ENCODE measurements at regions of chr17 and their contacts with region 1.

Region 1: DNA sequence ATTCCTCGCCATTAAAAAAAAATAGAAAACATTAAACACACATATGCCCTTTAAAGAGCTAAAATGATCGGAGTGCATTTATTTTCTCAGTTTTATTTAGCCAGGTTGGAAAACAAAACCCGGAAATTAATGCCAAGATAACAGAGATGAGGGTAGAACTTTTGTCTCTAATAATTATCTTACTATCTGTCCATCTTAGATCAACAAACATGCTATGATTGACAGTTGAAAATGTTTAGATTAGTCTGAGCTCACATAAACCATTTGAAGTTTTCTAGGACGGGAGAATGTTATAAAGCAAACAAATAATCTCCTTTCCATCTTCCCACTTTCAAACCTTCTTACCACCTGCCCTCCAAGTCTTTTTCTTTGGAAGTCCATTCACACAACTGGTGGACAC is 333.4 kb upstream of the SOX9 start:
- DNase-seq: no peak
- ATAC-seq: no peak
- H3K4me3 ChIP-seq: no peak overlapping the region
- H3K27ac ChIP-seq: no peak overlapping the region
- H3K4me1 ChIP-seq: no peaks in the 10 kb centered on the region
- H3K27me3 ChIP-seq: peaks cover 0 to 4% (median 0%) of the 10 kb centered on the region in 9 donors
- CTCF ChIP-seq: no peak
- POLR2A ChIP-seq: no peak

Region 2: DNA sequence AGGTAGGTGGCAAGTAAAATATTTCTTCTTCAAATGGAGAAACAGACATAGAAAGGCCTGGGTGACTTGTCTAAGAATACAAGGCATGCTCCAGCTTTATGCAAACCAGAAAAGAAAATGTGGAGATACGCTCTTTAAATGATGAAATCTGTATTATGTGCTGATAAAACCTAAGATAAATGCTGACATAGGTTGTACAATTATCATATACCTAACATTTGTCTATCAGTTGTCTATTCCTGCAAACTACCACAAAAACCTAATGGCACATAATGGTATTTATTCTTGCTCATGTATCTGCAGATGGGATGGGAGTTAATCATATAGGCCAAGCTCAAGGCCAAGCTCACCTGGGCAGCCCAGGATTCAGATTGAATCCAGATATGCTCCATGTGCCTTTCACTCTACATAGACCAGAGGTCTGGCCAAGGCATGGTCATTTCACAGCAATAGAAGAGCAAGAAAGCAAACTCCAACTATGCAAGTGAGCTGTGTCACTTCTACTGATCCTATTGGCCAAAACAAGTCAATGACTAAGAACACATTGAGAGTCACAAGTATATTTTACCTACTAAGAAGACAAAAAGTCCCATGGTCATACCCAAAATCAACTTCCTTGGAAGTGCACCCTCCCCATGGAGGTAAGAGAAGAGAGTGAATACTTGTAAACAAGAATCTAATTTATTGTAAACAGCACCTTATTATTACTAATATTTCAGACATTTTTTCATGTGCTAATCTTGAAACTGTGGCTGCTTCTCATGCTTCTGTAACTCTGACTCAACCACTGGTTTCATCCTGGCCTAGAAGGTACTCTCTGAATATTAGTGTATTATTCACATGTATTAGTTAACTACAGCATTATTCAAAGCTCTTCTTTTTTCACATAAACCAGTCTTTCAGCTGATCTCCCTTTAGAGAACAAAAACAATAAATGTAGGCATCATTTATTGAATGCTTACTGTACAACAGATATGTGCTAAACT is 62.6 kb after region 1 on chr17:
- intact Hi-C with region 1: loop called in 1 of 10 experiments (anchors 10 kb)
- DNase-seq: no peak
- ATAC-seq: no peak
- H3K4me3 ChIP-seq: no peak overlapping the region
- H3K27ac ChIP-seq: no peak overlapping the region
- H3K4me1 ChIP-seq: no peaks in the 10 kb centered on the region
- H3K27me3 ChIP-seq: peaks cover 0 to 3% (median 0%) of the 10 kb centered on the region in 9 donors
- CTCF ChIP-seq: no peak
- POLR2A ChIP-seq: no peak

Measured in heart left ventricle (tissue), 16 donors.